SK-N-SH (cell line): ENCODE measurements at regions of chr19 and their contacts with region 1.

Region 1: DNA sequence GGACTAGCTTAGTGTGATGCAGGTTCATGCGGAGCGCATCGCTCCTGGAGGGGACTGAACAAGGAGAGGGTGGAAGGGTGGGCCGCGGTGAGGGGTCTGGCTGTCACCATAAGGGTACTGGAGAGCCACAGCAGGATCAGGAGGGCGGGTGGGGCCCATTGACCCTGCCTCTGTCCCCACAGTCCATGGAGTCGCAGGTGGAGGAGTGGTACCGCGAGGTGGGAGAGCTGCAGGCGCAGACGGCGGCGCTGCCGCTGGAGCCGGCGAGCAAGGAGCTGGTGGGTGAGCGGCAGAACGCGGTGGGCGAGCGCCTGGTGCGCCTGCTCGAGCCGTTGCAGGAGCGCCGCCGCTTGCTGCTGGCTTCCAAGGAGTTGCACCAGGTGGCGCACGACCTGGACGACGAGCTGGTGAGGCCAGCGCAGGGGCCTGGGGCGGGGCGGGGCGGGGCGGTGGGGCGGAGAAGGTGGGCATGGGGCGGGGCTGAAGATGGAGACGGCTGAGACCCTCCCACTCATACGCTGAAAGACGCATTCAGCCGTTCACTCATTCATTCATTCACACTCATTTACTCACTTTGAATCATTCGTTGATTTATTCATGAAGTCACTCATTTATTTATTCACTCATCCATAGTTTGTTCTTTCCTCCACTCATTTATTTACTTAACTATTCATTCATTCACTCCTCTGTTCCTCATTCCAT is 27.5 kb upstream of the SHKBP1 start:
- DNase-seq: peak; percentile 95
- H3K4me3 ChIP-seq: peak overlapping the region in 1 of 2 experiments; percentile 10; a peak in 2 of 4 replicates
- H3K27ac ChIP-seq: no peak overlapping the region
- H3K4me1 ChIP-seq: peaks cover 3 to 4% of the 10 kb centered on the region in 2 experiments; a peak in 1 of 4 replicates
- H3K27me3 ChIP-seq: no peaks in the 10 kb centered on the region
- CTCF ChIP-seq: peak; percentile 40
- EP300 ChIP-seq: no peak
- RAD21 ChIP-seq: peak; percentile 50

Region 2: GRCh38 chr19:40570313-40571004 is 21.3 kb after region 1 on chr19:
- CTCF ChIA-PET with region 1: interaction called, 11 read pairs
- POLR2A ChIA-PET with region 1: no interaction called
- DNase-seq: peak; percentile 98
- H3K4me3 ChIP-seq: peak overlapping the region; percentile 58 to 76
- H3K27ac ChIP-seq: peak overlapping the region; percentile 51 to 87; a peak in 3 of 4 replicates
- H3K4me1 ChIP-seq: peaks cover 0 to 9% of the 10 kb centered on the region in 2 experiments; a peak in 1 of 4 replicates
- H3K27me3 ChIP-seq: no peaks in the 10 kb centered on the region
- CTCF ChIP-seq: no peak
- EP300 ChIP-seq: no peak
- RAD21 ChIP-seq: no peak

Region 3: DNA sequence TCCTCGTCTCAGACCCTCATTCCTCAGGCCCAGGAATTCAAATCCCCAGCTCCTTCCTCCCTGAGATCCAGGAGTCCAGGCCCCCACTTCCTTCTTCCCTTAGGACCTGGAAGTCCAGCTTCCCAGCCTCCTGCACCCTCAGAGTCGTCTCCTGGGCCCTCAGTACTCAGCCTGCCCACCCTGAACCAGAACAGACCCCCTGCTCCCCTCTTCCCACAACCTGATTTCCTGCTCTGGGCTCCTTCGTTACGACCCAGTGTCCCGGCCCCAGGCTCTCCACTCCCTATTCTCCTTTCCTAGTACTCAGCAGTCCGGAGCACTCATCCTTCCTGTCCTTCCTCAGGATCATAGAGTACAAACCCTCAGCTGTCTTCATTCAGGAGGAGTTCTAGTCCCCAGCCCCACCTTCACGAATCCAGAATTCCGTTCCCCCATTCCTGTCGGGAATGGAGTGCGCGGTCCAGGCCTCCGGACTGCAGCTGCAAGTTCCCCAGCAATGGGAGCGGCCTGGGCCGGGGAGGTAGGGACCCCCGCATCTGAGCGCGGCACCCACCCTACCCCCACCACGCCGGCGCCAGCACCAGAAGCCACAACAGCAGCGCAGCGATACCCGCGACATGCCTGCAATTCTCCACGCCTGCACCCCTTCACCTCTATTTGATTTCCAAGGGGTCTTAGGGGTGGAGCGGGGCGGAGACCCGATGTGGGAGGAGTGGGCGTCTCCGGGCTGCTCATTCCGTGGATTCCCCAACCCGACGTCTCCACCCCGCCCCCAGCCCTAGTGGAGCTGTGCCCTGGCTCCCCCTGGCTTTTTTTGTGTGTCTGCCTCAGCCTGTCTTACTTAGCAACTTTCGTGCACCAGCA is 262.6 kb after region 1 on chr19:
- CTCF ChIA-PET with region 1: no interaction called
- POLR2A ChIA-PET with region 1: no interaction called
- DNase-seq: no peak
- H3K4me3 ChIP-seq: no peak overlapping the region
- H3K27ac ChIP-seq: no peak overlapping the region
- H3K4me1 ChIP-seq: peaks cover 5 to 16% of the 10 kb centered on the region in 2 experiments; a peak in 3 of 4 replicates
- H3K27me3 ChIP-seq: no peaks in the 10 kb centered on the region
- CTCF ChIP-seq: no peak
- EP300 ChIP-seq: no peak
- RAD21 ChIP-seq: no peak